SK-N-SH (cell line): ENCODE measurements at regions of chr5 and their contacts with region 1.

Region 1: GRCh38 chr5:54944364-54944763 is 41.0 kb downstream of the ESM1 start:
- DNase-seq: peak; percentile 22
- H3K4me3 ChIP-seq: no peak overlapping the region
- H3K27ac ChIP-seq: no peak overlapping the region
- H3K4me1 ChIP-seq: peaks cover 0 to 3% of the 10 kb centered on the region in 2 experiments; a peak in 1 of 4 replicates
- H3K27me3 ChIP-seq: no peaks in the 10 kb centered on the region; the same call in 1 of the 2 replicates
- CTCF ChIP-seq: peak; percentile 84
- EP300 ChIP-seq: no peak
- RAD21 ChIP-seq: peak; percentile 45; the same call in 1 of the 2 replicates

Region 2: DNA sequence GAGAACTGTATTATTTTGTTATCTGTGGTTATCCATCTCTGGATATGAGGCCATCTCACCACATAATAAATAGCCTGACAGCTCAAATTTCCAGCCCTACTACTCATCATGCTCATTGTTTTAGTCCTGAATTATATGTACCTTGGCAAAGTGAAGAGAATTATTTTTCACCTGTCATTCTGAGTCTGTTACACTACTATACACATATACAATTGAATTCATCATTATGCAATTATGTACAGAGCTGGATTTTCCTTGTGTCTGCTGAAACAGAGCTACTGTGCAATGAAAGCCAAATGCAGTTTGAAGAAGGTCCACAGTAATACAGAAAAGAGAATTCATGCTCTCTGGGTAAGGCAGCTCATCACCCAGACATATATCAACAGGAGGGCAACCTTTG is 12.6 kb after region 1 on chr5:
- CTCF ChIA-PET with region 1: interaction called, 15 read pairs
- POLR2A ChIA-PET with region 1: no interaction called
- DNase-seq: no peak
- H3K4me3 ChIP-seq: no peak overlapping the region
- H3K27ac ChIP-seq: no peak overlapping the region
- H3K4me1 ChIP-seq: no peaks in the 10 kb centered on the region
- H3K27me3 ChIP-seq: peaks cover under 1% of the 10 kb centered on the region; the same call in 1 of the 2 replicates
- CTCF ChIP-seq: no peak
- EP300 ChIP-seq: no peak
- RAD21 ChIP-seq: no peak

Region 3: GRCh38 chr5:54965806-54966205 is 21.4 kb after region 1 on chr5:
- CTCF ChIA-PET with region 1: interaction called, 11 read pairs
- POLR2A ChIA-PET with region 1: no interaction called
- DNase-seq: no peak
- H3K4me3 ChIP-seq: no peak overlapping the region
- H3K27ac ChIP-seq: no peak overlapping the region
- H3K4me1 ChIP-seq: no peaks in the 10 kb centered on the region
- H3K27me3 ChIP-seq: peaks cover 25% of the 10 kb centered on the region; the same call in 1 of the 2 replicates
- CTCF ChIP-seq: no peak
- EP300 ChIP-seq: no peak
- RAD21 ChIP-seq: no peak

Region 4: DNA sequence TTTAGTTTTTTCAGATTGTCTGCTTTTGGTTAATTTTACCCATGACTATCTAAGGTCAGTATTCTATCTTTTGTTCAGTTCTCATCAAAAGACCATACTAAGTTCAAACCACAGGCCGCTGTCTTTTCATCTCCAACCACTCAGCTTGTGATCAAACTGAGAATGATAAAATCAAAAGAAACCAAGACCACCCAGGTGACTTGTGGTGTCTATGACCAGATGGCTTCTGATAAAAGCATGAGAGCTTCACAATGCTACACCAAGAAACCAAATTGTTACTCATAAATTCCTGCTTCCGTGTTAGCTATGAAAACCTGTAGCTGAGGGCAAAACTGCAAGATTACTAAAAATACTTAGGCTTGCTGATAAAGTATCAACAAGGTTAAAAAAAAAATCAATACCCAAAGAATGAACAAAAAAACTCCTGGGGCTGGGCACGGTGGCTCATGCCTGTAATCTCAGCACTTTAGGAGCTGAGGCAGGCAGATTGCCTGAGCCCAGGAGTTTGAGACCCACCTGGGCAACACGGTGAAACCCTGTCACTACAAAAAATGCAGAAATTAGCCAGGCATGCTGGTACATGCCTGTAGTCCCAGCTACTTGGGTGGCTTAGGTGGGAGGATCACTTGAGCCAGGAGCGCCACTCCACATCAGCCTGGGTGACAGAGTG is 189.8 kb after region 1 on chr5:
- CTCF ChIA-PET with region 1: interaction called, 12 read pairs
- POLR2A ChIA-PET with region 1: no interaction called
- DNase-seq: no peak
- H3K4me3 ChIP-seq: no peak overlapping the region
- H3K27ac ChIP-seq: no peak overlapping the region
- H3K4me1 ChIP-seq: no peaks in the 10 kb centered on the region
- H3K27me3 ChIP-seq: peaks cover 10% of the 10 kb centered on the region; the same call in 1 of the 2 replicates
- CTCF ChIP-seq: no peak
- EP300 ChIP-seq: no peak
- RAD21 ChIP-seq: no peak